ENCODE measurements at regions of chr1 and their contacts with region 1.

Region 1: GRCh38 chr1:1574721-1575537 is at the start of gene SSU72:
- DNase-seq: peak; percentile 76 to 83
- H3K4me3 ChIP-seq: peak within 1 kb of the TSS; percentile 96
- H3K27ac ChIP-seq: peak within 1 kb of the TSS; percentile 81
- H3K4me1 ChIP-seq: peaks cover 14% of the 10 kb centered on the region
- H3K27me3 ChIP-seq: peaks cover 18% of the 10 kb centered on the region
- CTCF ChIP-seq: no peak
- total RNA-seq, gene SSU72: 139 and 145 TPM in 2 replicates

Region 2: DNA sequence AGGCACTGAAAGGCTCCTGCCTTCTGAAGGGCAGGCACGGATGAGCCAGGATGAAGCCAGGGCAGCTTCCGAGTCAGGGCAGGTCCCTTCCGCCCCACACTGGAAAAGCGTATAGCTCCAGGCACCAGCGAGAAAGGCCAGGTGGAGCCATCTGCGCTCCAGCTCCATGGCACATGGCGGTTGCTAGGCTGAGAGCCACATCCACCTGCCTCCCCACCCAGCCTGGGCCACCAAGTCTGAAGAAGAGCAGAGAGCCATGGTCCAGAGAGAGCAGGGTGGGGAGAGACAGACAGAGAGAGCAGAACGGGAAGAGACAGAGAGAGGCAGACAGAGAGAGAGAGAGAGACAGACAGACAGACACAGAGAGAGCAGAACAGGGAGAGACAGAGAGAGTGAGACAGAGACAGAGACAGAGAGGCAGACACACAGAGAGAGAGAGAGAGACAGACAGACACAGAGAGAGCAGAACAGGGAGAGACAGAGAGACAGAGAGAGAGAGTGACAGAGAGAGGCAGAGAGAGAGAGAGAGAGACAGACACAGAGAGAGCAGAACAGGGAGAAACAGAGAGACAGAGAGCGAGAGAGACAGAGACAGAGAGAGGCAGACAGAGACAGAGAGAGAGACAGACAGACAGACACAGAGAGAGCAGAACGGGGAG is 19.8 kb after region 1 on chr1:
- CTCF ChIA-PET with region 1: no interaction called
- POLR2A ChIA-PET with region 1: no interaction called
- intact Hi-C with region 1: no loop called
- DNase-seq: no peak
- H3K4me3 ChIP-seq: no peak overlapping the region
- H3K27ac ChIP-seq: no peak overlapping the region
- H3K4me1 ChIP-seq: no peaks in the 10 kb centered on the region
- H3K27me3 ChIP-seq: peaks cover 18% of the 10 kb centered on the region; the same call in 1 of the 2 replicates
- CTCF ChIP-seq: no peak

Region 3: DNA sequence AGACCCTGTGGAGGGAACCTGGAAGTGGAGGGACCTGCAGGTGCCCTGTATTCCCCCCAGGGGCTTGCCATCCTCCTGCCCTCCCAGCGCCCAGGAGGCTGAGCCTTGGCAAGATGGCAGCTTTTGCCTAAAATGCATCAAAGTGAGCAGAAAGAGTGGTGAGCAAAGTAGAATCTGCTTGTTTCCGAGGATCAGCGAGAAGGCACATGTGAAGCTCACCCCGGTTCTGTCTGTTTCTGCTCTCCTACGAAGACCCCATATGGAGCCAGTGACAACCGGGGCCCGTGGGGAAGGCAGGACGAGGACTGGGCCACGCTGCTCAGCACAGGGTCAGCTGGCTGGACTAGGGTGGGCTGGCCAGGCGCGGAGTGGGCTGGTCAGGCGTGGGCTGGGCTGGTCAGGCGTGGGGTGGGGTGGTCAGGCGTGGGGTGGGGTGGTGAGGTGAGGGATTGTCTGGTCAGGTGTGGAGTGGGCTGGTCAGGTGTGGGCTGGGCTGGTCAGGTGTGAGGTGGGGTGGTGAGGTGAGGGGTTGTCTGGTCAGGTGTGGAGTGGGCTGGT is 30.2 kb after region 1 on chr1:
- CTCF ChIA-PET with region 1: interaction called, 25 read pairs
- POLR2A ChIA-PET with region 1: no interaction called
- intact Hi-C with region 1: no loop called
- DNase-seq: no peak
- H3K4me3 ChIP-seq: no peak overlapping the region
- H3K27ac ChIP-seq: no peak overlapping the region
- H3K4me1 ChIP-seq: no peaks in the 10 kb centered on the region
- H3K27me3 ChIP-seq: no peaks in the 10 kb centered on the region; the same call in 1 of the 2 replicates
- CTCF ChIP-seq: no peak

Region 4: DNA sequence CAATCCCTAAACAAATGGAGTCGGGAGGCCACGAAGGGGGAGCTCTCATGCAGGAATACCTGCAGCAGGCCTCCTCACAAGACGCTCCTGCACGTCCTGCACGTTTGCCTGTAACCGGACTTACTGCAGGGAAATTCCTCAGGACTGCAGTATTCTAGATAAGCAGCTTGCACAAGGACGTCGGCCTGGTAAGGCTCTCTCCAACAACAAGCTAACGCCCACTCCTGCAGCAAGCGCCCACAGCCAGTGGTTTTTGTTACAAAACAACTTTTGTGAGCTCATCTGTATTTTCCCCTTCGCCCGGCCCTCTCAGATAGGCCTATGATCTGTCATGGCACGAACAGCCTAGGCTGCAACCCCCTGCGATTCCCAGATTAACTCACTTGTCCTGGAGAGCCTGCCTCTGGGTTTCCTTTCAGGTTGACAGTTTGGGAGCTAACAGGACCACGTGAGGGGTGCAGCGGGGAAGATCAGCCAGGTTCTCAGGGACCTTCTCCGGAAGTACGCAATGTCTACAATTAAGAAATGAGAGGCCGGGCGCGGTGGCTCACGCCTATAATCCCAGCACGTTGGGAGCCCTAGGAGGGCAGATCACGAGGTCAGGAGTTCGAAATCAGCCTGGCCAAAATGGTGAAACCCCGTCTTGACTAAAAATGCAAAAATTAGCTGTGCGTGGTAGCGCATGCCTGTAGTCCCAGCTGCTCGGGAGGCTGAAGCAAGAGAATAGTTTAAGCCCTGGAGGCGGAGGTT is 39.5 kb after region 1 on chr1:
- CTCF ChIA-PET with region 1: no interaction called
- POLR2A ChIA-PET with region 1: interaction called, 17 read pairs
- intact Hi-C with region 1: no loop called
- DNase-seq: peak; percentile 17 to 51
- H3K4me3 ChIP-seq: peak overlapping the region; percentile 79
- H3K27ac ChIP-seq: no peak overlapping the region
- H3K4me1 ChIP-seq: peaks cover 21% of the 10 kb centered on the region
- H3K27me3 ChIP-seq: no peaks in the 10 kb centered on the region
- CTCF ChIP-seq: no peak